Left ventricle myocardium inferior (tissue), 1 donor: ENCODE measurements at regions of chr4 and their contacts with region 1.

Region 1: DNA sequence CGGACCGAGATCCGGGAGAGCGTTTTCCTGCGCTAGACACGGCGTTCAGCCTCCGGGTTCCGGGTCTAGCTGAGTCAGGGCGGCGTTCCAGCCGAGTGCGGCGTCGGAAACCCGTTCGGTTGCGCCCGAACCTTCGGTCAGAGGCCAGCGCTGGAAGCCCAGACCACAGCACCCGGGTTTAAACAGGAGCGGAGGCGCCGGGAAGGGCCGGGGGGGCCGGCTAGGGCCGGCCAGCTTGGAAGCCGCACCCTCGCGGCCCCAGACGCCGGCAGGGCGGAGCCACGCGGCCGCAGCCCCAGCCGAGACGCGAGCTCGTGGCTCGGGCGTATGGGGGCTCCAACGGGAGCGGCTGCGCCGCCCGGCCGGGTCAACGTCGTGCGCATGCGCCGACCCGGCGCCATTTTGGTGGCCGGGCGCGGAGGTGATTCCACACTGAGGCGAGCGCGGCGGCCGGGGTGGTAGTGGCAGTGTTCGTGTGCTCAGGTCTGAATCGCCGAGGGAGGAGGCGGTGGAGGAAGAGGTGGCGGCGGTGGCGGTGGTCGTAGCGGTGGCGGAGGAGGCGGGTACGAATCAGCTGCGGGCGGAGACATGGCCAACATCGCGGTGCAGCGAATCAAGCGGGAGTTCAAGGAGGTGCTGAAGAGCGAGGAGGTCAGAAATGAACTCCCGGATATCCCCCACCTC is at the start of gene UBE2K:
- DNase-seq: peak; percentile 91
- H3K4me3 ChIP-seq: peak within 1 kb of the TSS; percentile 93
- H3K27ac ChIP-seq: peak within 1 kb of the TSS; percentile 98
- H3K4me1 ChIP-seq: peaks cover 55% of the 10 kb centered on the region
- H3K27me3 ChIP-seq: no peaks in the 10 kb centered on the region
- CTCF ChIP-seq: no peak
- total RNA-seq, gene UBE2K: 54.4 TPM

Region 2: DNA sequence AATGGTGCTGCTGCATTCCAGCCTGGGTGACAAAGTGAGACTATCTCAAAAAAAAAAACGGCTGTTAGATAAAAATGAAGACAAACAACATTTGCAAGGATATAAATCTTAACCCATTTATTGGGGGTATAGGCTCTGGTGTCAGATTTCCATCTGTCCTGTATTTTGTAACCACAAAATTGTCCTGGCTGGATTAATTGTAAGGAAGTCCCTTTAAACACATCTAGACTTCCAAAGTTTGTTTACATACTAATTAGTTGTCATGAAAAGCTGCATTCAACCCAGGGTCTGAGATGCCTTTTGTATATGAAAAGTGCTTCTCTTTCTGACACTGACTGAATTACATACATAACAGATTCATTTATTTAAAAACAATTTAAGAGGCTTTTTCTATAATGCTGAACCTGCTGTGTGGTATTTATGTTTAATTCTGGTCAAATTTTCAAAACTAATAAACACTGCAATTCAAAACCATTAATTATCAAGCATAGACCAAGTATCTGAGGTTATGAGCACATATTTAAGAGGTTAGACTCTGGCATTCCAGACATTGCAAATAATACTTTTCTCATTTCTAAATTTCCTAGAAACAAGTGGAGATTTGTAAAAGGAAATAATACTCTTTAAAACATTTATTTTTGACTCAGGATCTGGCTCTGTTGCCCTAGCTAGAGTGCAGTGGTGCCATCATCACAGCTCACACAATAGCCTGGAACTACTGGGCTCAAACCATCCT is 153.1 kb before region 1 on chr4:
- intact Hi-C with region 1: no loop called
- DNase-seq: no peak
- H3K4me3 ChIP-seq: no peak overlapping the region
- H3K27ac ChIP-seq: no peak overlapping the region
- H3K4me1 ChIP-seq: no peaks in the 10 kb centered on the region
- H3K27me3 ChIP-seq: no peaks in the 10 kb centered on the region
- CTCF ChIP-seq: no peak

Region 3: DNA sequence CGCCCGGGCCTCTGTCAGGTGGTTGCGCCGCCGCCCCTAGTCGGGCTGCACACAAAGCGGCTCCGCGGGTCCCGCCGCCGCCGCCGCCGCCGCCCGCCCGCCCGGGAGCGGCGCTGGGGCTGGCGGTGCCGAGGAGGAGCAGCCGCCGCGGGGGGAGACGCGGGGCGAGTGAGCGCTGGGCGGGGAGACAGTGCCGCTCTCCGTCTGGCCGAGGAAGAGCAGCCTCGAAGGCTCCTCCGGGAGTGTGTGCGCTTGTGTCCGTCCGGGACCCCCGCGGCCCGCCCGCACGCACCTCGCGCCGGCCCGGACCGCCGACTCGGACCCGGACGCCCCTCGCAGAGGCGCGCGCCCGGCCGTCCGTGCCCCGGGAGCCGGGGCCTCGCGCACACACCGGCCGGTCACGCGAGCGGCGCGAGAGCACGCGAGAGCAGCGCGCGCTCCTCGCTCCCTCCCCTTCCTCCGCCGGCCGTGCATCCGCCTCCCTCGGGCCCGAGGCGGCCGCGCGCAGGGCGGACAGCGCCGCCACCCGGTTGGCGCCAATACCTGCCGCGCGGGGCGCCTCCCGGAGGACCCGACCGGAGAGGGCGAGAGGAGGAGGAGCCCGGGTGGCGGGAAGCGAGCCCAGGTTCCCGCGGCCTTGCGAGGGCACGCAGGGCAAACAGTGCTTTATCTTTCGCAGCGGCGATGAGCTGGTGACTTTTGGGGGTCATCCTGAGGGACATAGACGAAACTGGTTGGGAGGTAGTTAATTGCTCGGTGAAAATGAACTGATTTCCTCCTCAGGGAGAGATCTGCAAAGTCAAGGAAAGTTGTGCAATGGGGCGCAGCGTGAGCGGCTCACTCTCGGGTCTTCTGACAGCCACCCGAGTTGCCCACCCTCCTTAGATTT is 279.9 kb after region 1 on chr4 and contains the start of gene PDS5A:
- intact Hi-C with region 1: loop called (anchors 5 kb)
- DNase-seq: peak; percentile 90
- H3K4me3 ChIP-seq: peak within 1 kb of the TSS; percentile 86
- H3K27ac ChIP-seq: peak within 1 kb of the TSS; percentile 91
- H3K4me1 ChIP-seq: peaks cover 44% of the 10 kb centered on the region
- H3K27me3 ChIP-seq: no peaks in the 10 kb centered on the region
- CTCF ChIP-seq: peak; percentile 87
- total RNA-seq, gene PDS5A: 29.3 TPM